Gastrocnemius medialis (tissue), 4 donors: ENCODE measurements at regions of chr14 and their contacts with region 1.

Region 1: GRCh38 chr14:24310646-24311604 is at the start of gene LTB4R:
- DNase-seq: peak; percentile 38 to 74
- ATAC-seq: peak; percentile 76 to 85
- H3K4me3 ChIP-seq: peak within 1 kb of the TSS; percentile 51 to 75 (median 55)
- H3K27ac ChIP-seq: peak within 1 kb of the TSS; percentile 71 to 81 (median 73)
- H3K4me1 ChIP-seq: peaks cover 12 to 19% of the 10 kb centered on the region in 2 donors
- H3K27me3 ChIP-seq: no peaks in the 10 kb centered on the region
- CTCF ChIP-seq: peak in 4 of 5 experiments; percentile 40 to 54 (median 46)
- POLR2A ChIP-seq: no peak
- total RNA-seq, gene LTB4R: 0.13 to 2.2 (median 0.75) TPM

Region 2: GRCh38 chr14:24271134-24271833 is 39.6 kb before region 1 on chr14 and contains the start of gene RABGGTA:
- in situ Hi-C with region 1: no loop called
- intact Hi-C with region 1: loop called (anchors 1 kb)
- DNase-seq: peak; percentile 65 to 81
- ATAC-seq: peak; percentile 95 to 97
- H3K4me3 ChIP-seq: peak within 1 kb of the TSS; percentile 78 to 98 (median 94)
- H3K27ac ChIP-seq: peak within 1 kb of the TSS; percentile 87 to 99 (median 98)
- H3K4me1 ChIP-seq: peaks cover 4 to 6% of the 10 kb centered on the region in 2 donors
- H3K27me3 ChIP-seq: no peaks in the 10 kb centered on the region
- CTCF ChIP-seq: peak; percentile 42 to 82 (median 70)
- POLR2A ChIP-seq: peak; percentile 35 to 48
- total RNA-seq, gene RABGGTA: 20.9 to 32.8 (median 28.0) TPM